Mammary epithelial cell (primary cell): ENCODE measurements at regions of chr6 and their contacts with region 1.

Region 1: DNA sequence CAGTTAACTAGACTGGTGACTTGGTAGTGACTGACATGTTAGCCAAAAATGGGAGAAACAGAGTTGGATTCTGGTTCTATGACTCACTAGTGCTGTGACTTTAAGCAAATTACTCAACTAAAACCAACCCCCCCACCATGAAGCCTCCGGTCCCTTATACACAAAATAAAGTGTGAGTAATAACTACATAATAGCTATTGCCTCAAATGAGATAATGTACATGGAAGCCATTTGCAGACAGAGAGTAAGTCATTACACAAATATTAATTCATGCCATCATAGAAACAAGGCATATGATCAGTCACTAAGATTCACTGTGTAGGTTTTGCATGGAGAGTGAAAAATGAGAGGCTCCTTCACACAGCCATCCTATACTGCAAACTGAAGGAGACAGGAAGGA is 111.9 kb downstream of the HIVEP2 start:
- DNase-seq: peak; percentile 91
- H3K4me3 ChIP-seq: no peak overlapping the region
- H3K27ac ChIP-seq: peak overlapping the region; percentile 53
- H3K4me1 ChIP-seq: peaks cover 13% of the 10 kb centered on the region
- H3K27me3 ChIP-seq: no peaks in the 10 kb centered on the region
- CTCF ChIP-seq: no peak

Region 2: DNA sequence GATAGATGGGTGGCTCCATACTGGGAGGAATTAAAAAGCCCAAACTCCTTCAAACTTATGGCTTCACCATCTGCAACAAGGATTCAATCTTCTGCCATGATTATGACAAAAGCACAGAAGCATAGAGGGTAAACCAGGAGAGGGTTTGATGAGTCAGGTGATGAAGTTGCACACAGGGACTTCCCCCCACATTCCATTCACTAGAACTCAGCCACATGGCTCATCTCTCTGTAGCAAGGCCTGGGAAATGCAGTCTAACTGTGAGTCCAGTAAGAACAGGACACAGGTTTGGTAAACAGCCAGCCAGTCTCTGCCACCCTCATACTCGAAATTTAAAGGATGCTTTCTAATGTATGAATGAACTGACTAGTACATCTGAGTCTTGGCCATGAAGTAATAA is 30.9 kb before region 1 on chr6:
- CTCF ChIA-PET with region 1: no interaction called
- dilution Hi-C with region 1: no loop called
- in situ Hi-C with region 1: no loop called
- intact Hi-C with region 1: loop called (anchors 2 kb)
- DNase-seq: peak; percentile 98
- H3K4me3 ChIP-seq: no peak overlapping the region
- H3K27ac ChIP-seq: peak overlapping the region; percentile 78
- H3K4me1 ChIP-seq: peaks cover 9% of the 10 kb centered on the region
- H3K27me3 ChIP-seq: no peaks in the 10 kb centered on the region
- CTCF ChIP-seq: no peak